MCF 10A (cell line): ENCODE measurements at regions of chr11 and their contacts with region 1.

Region 1: GRCh38 chr11:83193315-83194280 is at the start of gene ANKRD42:
- DNase-seq: peak; percentile 97
- H3K4me3 Mint-ChIP-seq: peak within 1 kb of the TSS; percentile 94
- H3K27ac Mint-ChIP-seq: peak within 1 kb of the TSS; percentile 92
- H3K4me1 Mint-ChIP-seq: peaks cover 34% of the 10 kb centered on the region
- H3K27me3 Mint-ChIP-seq: no peaks in the 10 kb centered on the region
- CTCF ChIP-seq: no peak
- total RNA-seq, gene ANKRD42: 8.6 and 13.5 TPM in 2 replicates

Region 2: DNA sequence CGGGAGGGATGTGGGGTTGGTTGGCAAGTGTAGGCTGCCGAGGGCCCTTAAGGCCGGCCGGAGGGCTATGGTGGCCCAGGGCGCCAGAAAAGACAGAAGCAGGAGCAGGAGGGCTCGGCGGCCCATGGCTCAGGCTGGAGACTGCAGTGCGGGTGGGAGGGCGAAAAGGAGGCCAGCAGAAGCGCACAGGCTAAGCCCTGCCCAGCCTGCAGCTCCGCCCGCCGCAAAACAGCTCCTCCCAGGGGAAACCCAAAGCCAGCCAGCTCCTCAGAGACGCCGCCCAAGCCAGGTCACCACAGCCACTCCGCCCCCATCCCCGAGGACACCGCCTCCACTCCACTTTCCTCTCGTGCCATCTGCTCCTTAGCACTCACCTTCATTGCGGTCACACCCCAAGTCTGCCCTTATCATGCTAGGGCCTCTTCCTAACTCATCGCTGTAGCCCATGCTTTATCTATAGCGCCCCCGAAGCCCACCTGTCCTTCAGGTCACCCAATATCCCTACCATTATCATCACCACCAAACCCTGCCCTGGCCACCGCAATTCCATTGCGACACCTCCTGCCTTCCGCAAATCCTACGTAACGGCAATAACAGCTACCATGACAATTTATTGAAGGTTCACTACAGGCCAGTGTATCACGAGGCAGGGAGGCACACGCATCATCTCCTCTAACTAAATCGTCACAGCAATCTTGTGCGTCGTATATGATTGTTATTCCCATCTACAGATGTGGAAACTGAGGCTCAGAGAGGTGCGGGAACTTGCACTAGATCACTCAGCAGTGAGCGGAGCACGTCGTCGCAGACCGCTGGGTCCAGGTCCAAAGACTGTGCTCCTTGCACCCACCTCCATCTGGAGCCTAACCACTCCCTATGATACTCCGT is 293.1 kb before region 1 on chr11 and contains the start of gene PRCP:
- CTCF ChIA-PET with region 1: interaction called, 4 read pairs
- POLR2A ChIA-PET with region 1: interaction called, 44 read pairs
- intact Hi-C with region 1: loop called (anchors 1 kb)
- DNase-seq: peak; percentile 91
- H3K4me3 Mint-ChIP-seq: peak within 1 kb of the TSS; percentile 88
- H3K27ac Mint-ChIP-seq: peak within 1 kb of the TSS; percentile 95
- H3K4me1 Mint-ChIP-seq: peaks cover 38% of the 10 kb centered on the region
- H3K27me3 Mint-ChIP-seq: no peaks in the 10 kb centered on the region
- CTCF ChIP-seq: no peak
- total RNA-seq, gene PRCP: 17.3 and 22.7 TPM in 2 replicates

Region 3: DNA sequence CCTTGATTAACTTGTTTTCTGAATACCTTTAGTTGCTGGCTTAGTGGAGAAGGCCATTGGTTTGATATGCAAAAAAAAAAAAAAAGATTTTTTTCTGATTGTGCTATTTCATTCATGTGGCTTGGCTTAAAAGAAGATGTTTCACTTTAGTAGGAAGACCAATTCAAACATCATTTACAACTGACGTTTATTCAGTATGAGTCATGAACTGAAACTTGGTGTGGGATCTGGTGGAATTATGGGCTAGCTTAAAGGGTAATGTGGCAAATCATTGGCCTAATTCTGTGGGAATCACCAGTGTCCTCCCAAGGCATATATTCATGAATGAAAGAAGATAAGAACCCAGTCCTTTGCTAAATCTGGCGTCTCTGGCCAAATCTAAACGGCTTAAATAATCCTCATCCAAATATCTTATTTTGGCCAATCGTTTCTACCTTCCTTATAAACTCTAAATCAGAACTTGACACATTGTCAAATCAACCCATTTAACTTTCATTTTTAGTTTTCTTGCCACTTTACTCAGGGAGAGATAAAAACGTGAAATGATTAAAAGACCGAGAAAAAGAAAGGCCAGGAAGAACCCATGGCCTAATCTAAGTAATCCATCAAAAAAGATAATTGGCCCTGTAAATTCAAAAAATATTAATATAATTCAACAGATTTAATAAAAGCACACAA is 215.0 kb before region 1 on chr11:
- CTCF ChIA-PET with region 1: no interaction called
- POLR2A ChIA-PET with region 1: no interaction called
- intact Hi-C with region 1: no loop called
- DNase-seq: peak; percentile 60
- H3K4me3 Mint-ChIP-seq: no peak overlapping the region
- H3K27ac Mint-ChIP-seq: peak overlapping the region; percentile 64
- H3K4me1 Mint-ChIP-seq: peaks cover 31% of the 10 kb centered on the region
- H3K27me3 Mint-ChIP-seq: no peaks in the 10 kb centered on the region
- CTCF ChIP-seq: no peak

Region 4: GRCh38 chr11:83033972-83034672 is 159.5 kb before region 1 on chr11:
- CTCF ChIA-PET with region 1: no interaction called
- POLR2A ChIA-PET with region 1: interaction called, 15 read pairs
- intact Hi-C with region 1: no loop called
- DNase-seq: peak; percentile 77
- H3K4me3 Mint-ChIP-seq: peak overlapping the region; percentile 66
- H3K27ac Mint-ChIP-seq: peak overlapping the region; percentile 72
- H3K4me1 Mint-ChIP-seq: peaks cover 22% of the 10 kb centered on the region
- H3K27me3 Mint-ChIP-seq: no peaks in the 10 kb centered on the region
- CTCF ChIP-seq: no peak

Region 5: DNA sequence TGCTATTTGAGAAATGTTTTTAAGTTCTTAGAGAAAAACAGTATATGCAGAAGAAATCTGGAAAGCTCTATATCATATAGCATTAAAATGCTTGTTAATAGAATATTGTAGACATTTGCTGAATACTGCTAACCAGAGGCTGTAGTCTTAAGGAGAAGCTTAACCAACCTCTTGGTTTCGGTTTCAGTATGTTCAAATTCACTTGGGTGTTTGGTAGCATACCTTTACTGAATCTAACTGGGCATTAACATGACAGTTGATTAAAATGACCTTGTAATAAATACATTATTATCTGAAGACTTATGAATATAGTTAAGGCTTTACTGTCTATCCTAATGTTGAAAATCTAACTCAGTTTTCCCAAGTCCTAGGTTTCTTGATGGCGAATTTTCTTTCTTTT is 31.2 kb before region 1 on chr11:
- CTCF ChIA-PET with region 1: interaction called, 4 read pairs
- POLR2A ChIA-PET with region 1: interaction called, 91 read pairs
- intact Hi-C with region 1: loop called (anchors 2 kb)
- DNase-seq: no peak
- H3K4me3 Mint-ChIP-seq: peak overlapping the region; percentile 98
- H3K27ac Mint-ChIP-seq: no peak overlapping the region
- H3K4me1 Mint-ChIP-seq: peaks cover 14% of the 10 kb centered on the region
- H3K27me3 Mint-ChIP-seq: no peaks in the 10 kb centered on the region
- CTCF ChIP-seq: no peak

Region 6: GRCh38 chr11:83285771-83286528 is 92.4 kb after region 1 on chr11 and contains the start of gene CCDC90B:
- CTCF ChIA-PET with region 1: interaction called, 4 read pairs
- POLR2A ChIA-PET with region 1: interaction called, 31 read pairs
- intact Hi-C with region 1: no loop called
- DNase-seq: peak; percentile 97
- H3K4me3 Mint-ChIP-seq: peak within 1 kb of the TSS; percentile 90
- H3K27ac Mint-ChIP-seq: peak within 1 kb of the TSS; percentile 99
- H3K4me1 Mint-ChIP-seq: peaks cover 10% of the 10 kb centered on the region
- H3K27me3 Mint-ChIP-seq: no peaks in the 10 kb centered on the region
- CTCF ChIP-seq: peak; percentile 6
- total RNA-seq, gene CCDC90B: 69.1 and 72.9 TPM in 2 replicates